Transverse colon (tissue), 4 donors: ENCODE measurements at regions of chr7 and their contacts with region 1.

Region 1: GRCh38 chr7:78006063-78006755 is 207.6 kb downstream of the PHTF2 start:
- DNase-seq: no peak
- H3K4me3 ChIP-seq: no peak overlapping the region
- H3K27ac ChIP-seq: no peak overlapping the region
- H3K4me1 ChIP-seq: no peaks in the 10 kb centered on the region
- H3K27me3 ChIP-seq: no peaks in the 10 kb centered on the region
- CTCF ChIP-seq: no peak
- EP300 ChIP-seq: no peak
- POLR2A ChIP-seq: no peak

Region 2: DNA sequence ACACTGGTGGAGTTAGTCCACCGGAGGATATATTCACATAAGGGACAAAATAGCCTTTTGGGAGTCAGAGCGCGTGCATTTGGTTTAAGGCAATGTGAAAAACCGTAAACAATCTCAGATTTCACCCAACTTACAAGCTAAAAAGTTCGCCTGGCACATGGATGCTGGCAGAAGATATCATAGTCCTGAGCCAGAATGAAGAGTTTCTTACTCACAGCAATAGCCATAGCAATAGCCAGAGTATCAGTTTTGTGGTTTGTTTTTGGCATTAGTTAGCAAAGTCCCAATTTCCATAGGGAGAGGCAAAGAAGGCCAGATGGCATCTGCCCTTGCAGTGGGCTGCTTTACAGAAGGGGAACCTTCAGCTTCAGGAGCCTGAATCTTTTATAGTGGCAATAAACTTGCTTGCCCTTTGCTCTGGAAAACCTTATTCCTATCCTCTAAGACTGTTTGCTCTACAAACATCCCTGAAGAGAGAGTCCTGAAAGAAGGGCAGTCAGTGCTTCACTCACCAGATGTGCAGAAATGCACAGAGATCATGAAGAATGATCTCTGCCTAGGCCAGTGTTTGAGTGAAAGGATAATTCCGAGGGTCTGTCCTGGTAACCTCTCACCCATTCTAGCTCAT is 338.6 kb before region 1 on chr7:
- in situ Hi-C with region 1: no loop called
- intact Hi-C with region 1: no loop called
- DNase-seq: peak; percentile 35
- H3K4me3 ChIP-seq: no peak overlapping the region
- H3K27ac ChIP-seq: peak overlapping the region; percentile 53 to 82 (median 70)
- H3K4me1 ChIP-seq: peaks cover 5 to 52% (median 22%) of the 10 kb centered on the region in 4 donors
- H3K27me3 ChIP-seq: no peaks in the 10 kb centered on the region
- CTCF ChIP-seq: no peak
- EP300 ChIP-seq: no peak
- POLR2A ChIP-seq: no peak

Region 3: GRCh38 chr7:78095549-78095948 is 89.3 kb after region 1 on chr7:
- in situ Hi-C with region 1: no loop called
- intact Hi-C with region 1: no loop called
- DNase-seq: no peak
- H3K4me3 ChIP-seq: no peak overlapping the region
- H3K27ac ChIP-seq: no peak overlapping the region
- H3K4me1 ChIP-seq: no peaks in the 10 kb centered on the region
- H3K27me3 ChIP-seq: no peaks in the 10 kb centered on the region
- CTCF ChIP-seq: no peak
- EP300 ChIP-seq: no peak
- POLR2A ChIP-seq: no peak

Region 4: DNA sequence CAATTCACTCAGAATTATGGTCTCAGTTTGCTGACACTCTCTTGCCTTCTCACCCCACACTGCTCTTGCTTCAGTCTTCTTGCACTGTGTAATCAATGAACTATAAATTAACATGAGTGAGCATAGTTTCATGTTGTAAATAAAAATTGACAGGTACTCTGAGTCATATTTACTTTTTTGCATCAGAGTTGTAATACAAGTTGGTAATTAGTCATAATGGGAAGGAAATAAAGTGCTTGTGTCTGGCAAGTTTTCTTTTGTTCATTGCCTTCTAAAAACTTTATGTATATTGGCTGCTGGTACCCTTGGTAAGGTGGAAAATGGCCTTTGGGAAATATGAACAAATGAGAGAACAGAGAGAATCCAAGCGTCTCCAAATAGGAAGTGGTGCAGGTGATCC is 1616.6 kb after region 1 on chr7:
- in situ Hi-C with region 1: no loop called
- intact Hi-C with region 1: no loop called
- DNase-seq: no peak
- H3K4me3 ChIP-seq: no peak overlapping the region
- H3K27ac ChIP-seq: no peak overlapping the region
- H3K4me1 ChIP-seq: no peaks in the 10 kb centered on the region
- H3K27me3 ChIP-seq: no peaks in the 10 kb centered on the region
- CTCF ChIP-seq: no peak
- EP300 ChIP-seq: no peak
- POLR2A ChIP-seq: no peak

Region 5: DNA sequence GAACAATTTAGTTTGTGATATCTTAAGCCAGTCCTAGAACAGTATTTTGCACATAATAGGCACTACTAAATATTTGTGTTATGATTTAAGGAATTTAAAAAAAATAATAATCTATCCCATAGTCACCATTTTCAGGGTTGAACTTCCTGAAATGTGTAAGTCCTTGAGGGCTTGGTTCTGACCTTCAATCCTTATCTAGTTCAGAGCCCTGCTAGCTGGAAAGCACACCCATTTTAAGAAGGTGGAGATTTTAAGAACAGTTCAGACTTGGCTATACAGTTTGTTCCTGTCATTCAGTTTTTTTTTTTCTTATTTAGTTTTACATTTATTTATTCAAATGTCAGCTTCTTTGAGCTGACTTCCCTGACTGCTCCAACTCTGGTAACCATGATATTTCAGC is 1630.6 kb after region 1 on chr7:
- in situ Hi-C with region 1: no loop called
- intact Hi-C with region 1: loop called (anchors 5 kb)
- DNase-seq: no peak
- H3K4me3 ChIP-seq: no peak overlapping the region
- H3K27ac ChIP-seq: no peak overlapping the region
- H3K4me1 ChIP-seq: peaks cover 0 to 12% (median 2%) of the 10 kb centered on the region in 4 donors
- H3K27me3 ChIP-seq: no peaks in the 10 kb centered on the region
- CTCF ChIP-seq: no peak
- EP300 ChIP-seq: no peak
- POLR2A ChIP-seq: no peak